ENCODE measurements at regions of chr15 and their contacts with region 1.

Region 1: DNA sequence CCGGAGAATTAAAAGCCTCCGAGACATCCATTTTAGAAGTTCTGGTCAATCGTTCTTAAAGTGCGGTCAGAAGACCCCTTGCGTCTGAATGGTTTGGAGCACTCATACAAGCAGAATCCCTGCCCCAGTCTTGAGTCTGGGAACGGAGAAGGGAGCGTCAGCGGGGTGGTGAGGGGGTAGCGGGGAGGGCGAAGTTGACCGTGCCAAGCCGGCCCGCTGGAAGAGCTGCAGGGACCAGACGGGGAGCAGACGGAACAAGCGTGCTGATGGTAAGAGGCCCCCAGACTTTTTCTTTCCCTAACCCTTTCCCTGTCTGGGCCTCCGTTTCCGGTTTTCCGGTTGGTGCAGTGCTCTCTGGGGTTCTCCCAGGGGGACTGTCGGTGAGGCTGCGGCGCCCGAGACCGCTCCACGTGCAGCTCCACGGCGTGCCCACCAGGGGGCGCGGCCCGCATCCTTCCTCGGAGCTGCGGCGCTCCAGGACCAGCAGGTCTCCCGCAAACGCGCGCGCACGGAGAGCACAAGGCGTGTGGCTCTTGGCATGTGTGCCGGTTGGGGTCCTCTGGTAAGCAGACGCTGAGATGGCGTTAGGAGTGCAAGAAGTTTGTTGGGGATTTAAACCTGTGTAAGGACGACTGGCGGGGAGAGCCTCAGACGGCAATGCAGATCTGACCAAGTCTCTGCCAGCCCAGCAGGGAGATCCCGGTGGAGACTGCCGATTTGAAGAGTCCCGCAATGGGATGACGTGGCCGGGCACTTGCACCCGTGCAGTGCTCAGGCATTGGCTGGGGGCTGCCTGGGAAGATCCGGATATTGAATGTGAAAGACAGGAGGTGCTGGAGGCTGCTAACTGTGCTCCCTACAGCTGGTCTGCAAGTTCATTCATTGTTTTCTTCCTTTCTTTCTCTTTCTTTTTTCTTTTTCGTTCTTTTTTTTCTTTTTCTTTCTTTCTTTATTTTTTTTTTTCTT is 19.2 kb upstream of the CORO2B start:
- DNase-seq: no peak
- ATAC-seq: peak; percentile 96
- H3K4me3 ChIP-seq: no peak overlapping the region
- H3K27ac ChIP-seq: no peak overlapping the region
- H3K4me1 ChIP-seq: no peaks in the 10 kb centered on the region
- H3K27me3 ChIP-seq: peaks cover 0 to 3% of the 10 kb centered on the region in 2 experiments; a peak in 2 of 4 replicates
- CTCF ChIP-seq: peak; percentile 85 to 93 (median 89)
- EP300 ChIP-seq: no peak
- POLR2A ChIP-seq: no peak
- RAD21 ChIP-seq: peak; percentile 52

Region 2: DNA sequence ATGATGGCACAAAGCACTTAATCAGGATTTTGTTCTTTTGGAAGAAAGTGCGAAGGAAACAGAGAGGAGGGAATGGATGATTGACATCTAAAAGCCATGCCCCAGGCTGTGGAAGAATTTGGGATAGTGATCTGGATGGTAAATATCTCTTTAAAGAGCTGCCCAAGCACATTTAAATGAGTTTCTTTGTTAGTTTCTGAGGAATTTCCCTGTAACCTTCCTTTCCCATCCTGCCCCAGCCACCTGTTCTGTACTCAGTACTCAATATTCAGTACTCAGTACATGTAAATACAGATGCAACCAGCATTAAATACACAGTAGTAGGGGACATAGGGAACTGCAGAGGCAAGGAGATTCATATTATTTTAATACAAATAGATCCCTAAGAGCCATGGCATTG is 11.3 kb after region 1 on chr15:
- CTCF ChIA-PET with region 1: interaction called, 14 read pairs
- POLR2A ChIA-PET with region 1: no interaction called
- RAD21 ChIA-PET with region 1: no interaction called
- SMC1A ChIA-PET with region 1: interaction called, 3 read pairs
- in situ Hi-C with region 1: no loop called
- intact Hi-C with region 1: no loop called
- DNase-seq: no peak
- ATAC-seq: no peak
- H3K4me3 ChIP-seq: no peak overlapping the region
- H3K27ac ChIP-seq: no peak overlapping the region
- H3K4me1 ChIP-seq: no peaks in the 10 kb centered on the region
- H3K27me3 ChIP-seq: peaks cover 7 to 9% of the 10 kb centered on the region in 2 experiments
- CTCF ChIP-seq: no peak
- EP300 ChIP-seq: no peak
- POLR2A ChIP-seq: no peak
- RAD21 ChIP-seq: no peak

Region 3: DNA sequence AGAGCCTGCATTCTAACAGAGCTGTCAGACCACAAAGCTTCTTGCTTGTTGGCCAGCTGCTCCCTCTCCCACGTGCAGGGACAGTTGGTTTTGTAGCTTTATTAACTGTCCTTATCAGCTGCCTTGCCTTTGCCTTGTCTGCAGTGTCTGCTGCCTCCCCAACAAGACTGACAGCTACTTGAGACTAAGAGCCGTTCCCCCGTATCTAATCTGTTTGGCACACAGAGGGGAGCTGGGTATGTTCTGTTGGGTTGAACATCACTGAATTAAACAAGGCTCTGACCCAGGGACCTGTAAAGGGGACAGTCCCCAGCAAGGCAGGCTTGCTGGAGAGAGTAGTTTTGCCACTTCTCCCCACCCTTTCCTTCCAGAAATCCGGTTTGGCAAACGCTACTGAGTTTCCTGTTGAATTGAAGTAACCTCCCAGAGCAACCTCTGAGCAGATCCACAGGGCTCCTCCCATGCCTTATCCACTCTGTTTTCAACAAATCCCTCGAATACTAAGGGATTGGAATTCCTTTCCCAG is 144.9 kb after region 1 on chr15:
- CTCF ChIA-PET with region 1: no interaction called
- POLR2A ChIA-PET with region 1: no interaction called
- RAD21 ChIA-PET with region 1: no interaction called
- SMC1A ChIA-PET with region 1: no interaction called
- in situ Hi-C with region 1: no loop called
- intact Hi-C with region 1: no loop called
- DNase-seq: no peak
- ATAC-seq: no peak
- H3K4me3 ChIP-seq: no peak overlapping the region
- H3K27ac ChIP-seq: no peak overlapping the region
- H3K4me1 ChIP-seq: no peaks in the 10 kb centered on the region
- H3K27me3 ChIP-seq: peaks cover 0 to 1% of the 10 kb centered on the region in 2 experiments; a peak in 1 of 4 replicates
- CTCF ChIP-seq: no peak
- EP300 ChIP-seq: no peak
- POLR2A ChIP-seq: no peak
- RAD21 ChIP-seq: no peak

Region 4: GRCh38 chr15:68924866-68925560 is 365.4 kb after region 1 on chr15:
- CTCF ChIA-PET with region 1: interaction called, 9 read pairs
- POLR2A ChIA-PET with region 1: no interaction called
- RAD21 ChIA-PET with region 1: no interaction called
- SMC1A ChIA-PET with region 1: no interaction called
- in situ Hi-C with region 1: no loop called
- intact Hi-C with region 1: loop called (anchors 5 kb)
- DNase-seq: peak; percentile 20
- ATAC-seq: peak; percentile 93
- H3K4me3 ChIP-seq: no peak overlapping the region
- H3K27ac ChIP-seq: no peak overlapping the region
- H3K4me1 ChIP-seq: no peaks in the 10 kb centered on the region
- H3K27me3 ChIP-seq: peaks cover 0 to 3% of the 10 kb centered on the region in 2 experiments; a peak in 1 of 4 replicates
- CTCF ChIP-seq: peak; percentile 74 to 78 (median 75); a peak in 5 of 6 replicates
- EP300 ChIP-seq: no peak
- POLR2A ChIP-seq: no peak
- RAD21 ChIP-seq: peak; percentile 65